Caco-2 (cell line): ENCODE measurements at regions of chr19 and their contacts with region 1.

Region 1: DNA sequence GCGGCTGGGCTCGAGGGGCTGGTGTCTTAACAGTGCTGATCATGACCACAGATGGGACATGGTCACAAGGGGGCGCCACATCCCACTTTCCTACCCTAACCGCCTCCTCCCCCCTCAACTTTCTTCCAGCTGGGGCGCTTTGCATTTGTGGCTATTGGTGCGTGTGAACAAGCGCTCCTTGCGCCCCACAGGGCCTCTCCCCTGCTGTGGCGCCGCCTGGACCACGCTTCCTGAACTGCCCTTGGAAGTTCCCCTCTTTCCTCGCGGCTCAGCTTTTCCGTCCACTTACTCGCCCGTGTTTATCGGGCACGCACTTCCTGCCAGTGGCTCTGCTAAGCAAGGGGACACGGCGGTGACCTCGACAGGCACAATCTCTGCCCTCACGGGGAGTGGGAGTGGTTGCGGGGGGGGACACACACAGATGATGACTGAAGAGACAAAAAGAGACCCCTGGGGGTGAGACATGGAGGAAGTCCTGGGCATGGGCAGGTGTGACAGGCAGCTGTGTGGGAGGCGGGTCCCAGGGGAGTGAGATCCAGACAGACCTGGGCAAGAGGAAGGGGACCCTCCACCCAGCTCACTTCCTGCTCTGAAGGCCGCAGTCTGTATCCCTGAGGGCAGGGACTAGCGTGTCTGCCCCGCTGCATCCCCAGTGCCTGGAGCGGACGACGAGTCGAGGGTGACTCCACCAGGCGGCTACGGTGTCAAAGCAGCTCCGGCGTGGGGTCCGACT is 40.3 kb downstream of the ZNF787 start:
- DNase-seq: peak in 1 of 2 experiments; percentile 55
- H3K4me3 ChIP-seq: no peak overlapping the region
- H3K4me3 Mint-ChIP-seq: no peak overlapping the region
- H3K27ac Mint-ChIP-seq: peak overlapping the region; percentile 36
- H3K4me1 ChIP-seq: no peaks in the 10 kb centered on the region
- H3K4me1 Mint-ChIP-seq: peaks cover 8% of the 10 kb centered on the region
- H3K27me3 ChIP-seq: no peaks in the 10 kb centered on the region
- H3K27me3 Mint-ChIP-seq: no peaks in the 10 kb centered on the region
- CTCF ChIP-seq: peak in 1 of 2 experiments; percentile 29

Region 2: GRCh38 chr19:55619286-55619685 is 461.5 kb before region 1 on chr19:
- CTCF ChIA-PET with region 1: no interaction called
- POLR2A ChIA-PET with region 1: no interaction called
- intact Hi-C with region 1: no loop called
- DNase-seq: no peak
- H3K4me3 ChIP-seq: no peak overlapping the region
- H3K4me3 Mint-ChIP-seq: no peak overlapping the region
- H3K27ac Mint-ChIP-seq: no peak overlapping the region
- H3K4me1 ChIP-seq: no peaks in the 10 kb centered on the region
- H3K4me1 Mint-ChIP-seq: peaks cover 7% of the 10 kb centered on the region
- H3K27me3 ChIP-seq: no peaks in the 10 kb centered on the region
- H3K27me3 Mint-ChIP-seq: no peaks in the 10 kb centered on the region
- CTCF ChIP-seq: no peak

Region 3: GRCh38 chr19:55966589-55966988 is 114.2 kb before region 1 on chr19:
- CTCF ChIA-PET with region 1: no interaction called
- POLR2A ChIA-PET with region 1: no interaction called
- intact Hi-C with region 1: no loop called
- DNase-seq: no peak
- H3K4me3 ChIP-seq: no peak overlapping the region
- H3K4me3 Mint-ChIP-seq: no peak overlapping the region
- H3K27ac Mint-ChIP-seq: no peak overlapping the region
- H3K4me1 ChIP-seq: no peaks in the 10 kb centered on the region
- H3K4me1 Mint-ChIP-seq: no peaks in the 10 kb centered on the region
- H3K27me3 ChIP-seq: no peaks in the 10 kb centered on the region
- H3K27me3 Mint-ChIP-seq: peaks cover 2% of the 10 kb centered on the region
- CTCF ChIP-seq: no peak

Region 4: GRCh38 chr19:56066152-56067023 is 14.4 kb before region 1 on chr19:
- CTCF ChIA-PET with region 1: interaction called, 14 read pairs
- POLR2A ChIA-PET with region 1: no interaction called
- intact Hi-C with region 1: no loop called
- DNase-seq: peak; percentile 77 to 81
- H3K4me3 ChIP-seq: no peak overlapping the region
- H3K4me3 Mint-ChIP-seq: peak overlapping the region; percentile 52
- H3K27ac Mint-ChIP-seq: no peak overlapping the region
- H3K4me1 ChIP-seq: 0 out of 2 replicates have a peak, but pooled peaks cover 3% of the 10 kb centered on the region
- H3K4me1 Mint-ChIP-seq: no peaks in the 10 kb centered on the region
- H3K27me3 ChIP-seq: no peaks in the 10 kb centered on the region
- H3K27me3 Mint-ChIP-seq: peaks cover 18% of the 10 kb centered on the region
- CTCF ChIP-seq: peak; percentile 95 to 96

Region 5: DNA sequence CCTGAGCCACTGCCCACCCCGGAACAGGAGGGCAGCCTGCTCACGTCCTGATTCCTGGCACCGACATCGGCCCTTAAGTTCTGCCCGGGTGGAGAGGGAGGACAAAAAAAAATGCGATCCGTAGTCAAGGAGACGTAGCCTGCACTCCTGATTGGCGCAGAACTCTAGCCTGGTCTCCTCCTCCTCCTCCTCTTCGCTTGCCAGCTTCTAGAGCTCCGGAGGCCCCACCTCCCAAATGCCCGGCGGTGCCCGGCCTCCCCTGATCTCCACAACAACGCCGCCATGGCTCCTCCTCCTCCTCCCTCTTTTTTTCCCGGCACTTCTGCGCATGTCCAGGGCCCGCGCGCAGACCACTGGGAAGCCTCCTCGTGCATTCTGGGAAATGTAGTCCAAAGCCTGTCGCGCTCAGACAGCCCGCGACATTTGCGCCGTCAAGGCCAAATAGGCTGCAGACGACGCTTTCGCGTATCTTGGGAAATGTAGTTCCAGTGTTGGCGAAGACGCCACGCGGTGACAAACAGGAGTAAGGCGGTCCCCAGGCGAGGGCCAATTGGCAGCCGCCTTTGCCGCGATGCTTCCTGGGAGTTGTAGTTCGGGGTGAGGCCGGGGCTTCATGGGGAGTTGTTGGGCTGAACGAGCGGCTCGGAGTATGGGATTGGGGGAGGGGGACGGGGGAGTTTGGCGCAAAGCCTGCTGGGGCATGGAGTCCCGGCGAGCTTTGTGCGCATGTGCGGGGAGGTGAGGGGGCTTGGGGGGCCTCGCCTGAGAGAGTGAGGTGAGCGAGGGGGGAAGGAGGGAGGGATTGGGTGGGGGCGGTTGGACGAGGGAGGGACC is 60.0 kb after region 1 on chr19 and contains the start of gene ZNF444:
- CTCF ChIA-PET with region 1: interaction called, 10 read pairs
- POLR2A ChIA-PET with region 1: no interaction called
- intact Hi-C with region 1: no loop called
- DNase-seq: peak; percentile 99 to 100
- H3K4me3 ChIP-seq: peak within 1 kb of the TSS; percentile 70
- H3K4me3 Mint-ChIP-seq: peak within 1 kb of the TSS; percentile 87
- H3K27ac Mint-ChIP-seq: peak within 1 kb of the TSS; percentile 97
- H3K4me1 ChIP-seq: peaks cover 21% of the 10 kb centered on the region
- H3K4me1 Mint-ChIP-seq: peaks cover 36% of the 10 kb centered on the region
- H3K27me3 ChIP-seq: no peaks in the 10 kb centered on the region
- H3K27me3 Mint-ChIP-seq: no peaks in the 10 kb centered on the region
- CTCF ChIP-seq: no peak
- total RNA-seq, gene ZNF444: 92.2 and 95.6 TPM in 2 replicates

Region 6: DNA sequence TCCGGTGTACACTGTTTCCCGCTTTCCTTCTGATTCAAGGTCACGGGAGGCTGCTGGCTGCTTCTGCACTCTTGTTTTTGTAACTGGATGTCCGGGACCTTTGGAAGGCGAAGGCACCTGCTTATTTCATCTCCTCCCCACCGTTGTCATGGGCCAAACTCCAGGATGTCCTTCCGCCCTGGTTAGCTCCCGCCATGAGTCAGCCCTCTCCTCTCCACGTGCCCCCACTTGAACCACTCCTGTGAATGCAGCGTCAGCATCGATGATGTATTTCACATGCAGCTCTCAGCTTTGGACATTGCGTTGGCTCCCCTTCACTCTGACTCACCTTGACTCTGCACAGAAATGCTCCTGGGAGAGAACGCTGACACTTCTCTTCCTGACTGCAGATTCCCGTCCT is 89.4 kb after region 1 on chr19:
- CTCF ChIA-PET with region 1: interaction called, 5 read pairs
- POLR2A ChIA-PET with region 1: no interaction called
- intact Hi-C with region 1: loop called (anchors 1 kb)
- DNase-seq: no peak
- H3K4me3 ChIP-seq: no peak overlapping the region
- H3K4me3 Mint-ChIP-seq: no peak overlapping the region
- H3K27ac Mint-ChIP-seq: no peak overlapping the region
- H3K4me1 ChIP-seq: no peaks in the 10 kb centered on the region
- H3K4me1 Mint-ChIP-seq: peaks cover 1% of the 10 kb centered on the region
- H3K27me3 ChIP-seq: no peaks in the 10 kb centered on the region
- H3K27me3 Mint-ChIP-seq: peaks cover 6% of the 10 kb centered on the region
- CTCF ChIP-seq: no peak

Region 7: DNA sequence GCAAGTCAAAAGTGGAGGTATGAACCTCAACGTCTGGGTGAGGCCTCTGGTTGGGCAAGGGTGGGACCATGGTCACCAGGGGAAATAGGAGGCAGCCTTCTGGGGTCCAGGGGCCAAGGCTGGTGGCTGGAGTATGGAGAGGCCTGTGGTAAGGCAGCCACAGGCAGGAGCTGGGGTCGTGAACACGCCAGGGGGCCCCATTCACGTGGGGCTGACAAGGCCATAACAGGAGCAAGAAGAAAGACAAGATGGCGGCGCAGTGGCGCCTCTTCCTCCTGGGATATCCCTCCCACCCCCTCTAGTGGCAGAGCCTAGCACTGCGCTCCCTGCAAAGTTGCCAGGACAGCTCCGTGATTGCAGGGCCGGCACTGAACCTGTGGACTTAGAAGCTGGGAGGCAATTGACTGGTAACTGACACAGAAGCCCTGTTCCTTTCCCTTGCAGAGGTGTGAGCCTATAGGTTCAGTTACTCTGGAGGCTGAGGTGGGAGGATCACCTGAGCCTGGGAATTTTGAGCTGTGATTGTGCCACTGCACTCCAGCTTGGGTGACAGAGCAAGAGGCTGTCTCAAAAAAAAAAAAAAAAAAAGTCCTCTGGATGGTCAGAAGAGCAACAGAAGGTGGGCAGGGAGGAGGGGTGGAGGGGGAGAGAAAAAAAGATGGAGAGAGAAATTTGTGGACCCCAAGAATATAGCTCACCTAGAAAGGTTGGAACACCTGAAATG is 172.0 kb after region 1 on chr19:
- CTCF ChIA-PET with region 1: interaction called, 13 read pairs
- POLR2A ChIA-PET with region 1: no interaction called
- intact Hi-C with region 1: loop called (anchors 1 kb)
- DNase-seq: peak; percentile 74 to 82
- H3K4me3 ChIP-seq: no peak overlapping the region
- H3K4me3 Mint-ChIP-seq: no peak overlapping the region
- H3K27ac Mint-ChIP-seq: no peak overlapping the region
- H3K4me1 ChIP-seq: no peaks in the 10 kb centered on the region
- H3K4me1 Mint-ChIP-seq: no peaks in the 10 kb centered on the region
- H3K27me3 ChIP-seq: no peaks in the 10 kb centered on the region
- H3K27me3 Mint-ChIP-seq: no peaks in the 10 kb centered on the region
- CTCF ChIP-seq: peak; percentile 69 to 70

Region 8: GRCh38 chr19:56314562-56315077 is 233.8 kb after region 1 on chr19 and contains the start of gene ZSCAN5A:
- CTCF ChIA-PET with region 1: no interaction called
- POLR2A ChIA-PET with region 1: no interaction called
- intact Hi-C with region 1: loop called (anchors 5 kb)
- DNase-seq: peak; percentile 95 to 97
- H3K4me3 ChIP-seq: peak within 1 kb of the TSS; percentile 66
- H3K4me3 Mint-ChIP-seq: peak within 1 kb of the TSS; percentile 86
- H3K27ac Mint-ChIP-seq: peak within 1 kb of the TSS; percentile 98
- H3K4me1 ChIP-seq: peaks cover 9% of the 10 kb centered on the region; the same call in 1 of the 2 replicates
- H3K4me1 Mint-ChIP-seq: peaks cover 12% of the 10 kb centered on the region
- H3K27me3 ChIP-seq: no peaks in the 10 kb centered on the region
- H3K27me3 Mint-ChIP-seq: no peaks in the 10 kb centered on the region
- CTCF ChIP-seq: no peak
- total RNA-seq, gene ZSCAN5A: 10.9 and 11.3 TPM in 2 replicates